Activated T-helper 1 cell treated with anti-CD3 and anti-CD28 coated beads, Interleukin-12 subunit alpha, Interleukin-12 subunit beta, Interleukin-2, Interleukin-4 antibody, amounts not matched to agents 30 ng/mL and 10 ng/mL and 1 ng/mL, durations not matched to agents 14 hours and 24 hours and 36 hours (primary cell): ENCODE measurements at regions of chr5 and their contacts with region 1.

Region 1: GRCh38 chr5:141691867-141692532 is 10.0 kb upstream of the ARAP3 start:
- DNase-seq: peak; percentile 83
- H3K4me3 Mint-ChIP-seq: peak overlapping the region; percentile 75
- H3K27ac Mint-ChIP-seq: peak overlapping the region; percentile 69
- H3K4me1 Mint-ChIP-seq: peaks cover 34% of the 10 kb centered on the region
- H3K27me3 Mint-ChIP-seq: peaks cover 12% of the 10 kb centered on the region

Region 2: DNA sequence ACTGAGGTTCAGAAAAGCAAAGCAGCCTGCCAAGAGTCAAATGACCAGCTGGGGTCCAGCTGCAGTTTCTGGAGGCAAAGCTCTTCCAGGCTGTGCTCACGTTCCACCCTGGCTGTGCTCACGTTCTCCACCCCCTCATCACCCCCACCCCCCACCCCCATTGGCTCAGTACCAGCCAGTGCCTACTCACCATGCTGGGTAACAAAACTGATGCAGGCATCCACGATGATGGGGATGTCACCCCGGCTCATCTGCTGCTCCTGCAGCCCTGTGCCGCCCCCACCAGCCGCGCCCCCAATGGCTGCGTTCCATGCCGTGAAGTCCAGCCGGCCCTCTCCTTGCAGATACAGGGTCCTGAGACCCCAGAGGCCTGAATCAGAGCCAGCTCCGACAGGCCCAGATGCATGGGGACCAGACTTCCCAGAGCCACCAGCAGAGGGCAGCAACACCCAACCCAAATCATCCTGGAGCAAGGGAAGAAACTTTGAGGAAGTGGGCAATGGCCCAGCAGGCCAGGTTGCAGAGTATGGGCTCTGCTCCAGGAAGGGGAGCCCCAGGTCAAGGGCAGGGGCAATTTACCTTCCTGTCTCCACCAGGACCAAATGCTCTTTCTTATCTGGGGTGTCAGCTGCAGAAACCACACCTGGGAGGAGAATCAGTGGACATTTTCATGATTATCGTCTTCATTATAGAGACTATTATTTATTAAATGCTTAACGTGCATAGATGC is 27.1 kb before region 1 on chr5:
- intact Hi-C with region 1: loop called (anchors 1 kb)
- DNase-seq: peak; percentile 59
- H3K4me3 Mint-ChIP-seq: no peak overlapping the region
- H3K27ac Mint-ChIP-seq: no peak overlapping the region
- H3K4me1 Mint-ChIP-seq: no peaks in the 10 kb centered on the region
- H3K27me3 Mint-ChIP-seq: peaks cover 2% of the 10 kb centered on the region

Region 3: GRCh38 chr5:141709699-141710267 is 17.8 kb after region 1 on chr5:
- intact Hi-C with region 1: no loop called
- DNase-seq: no peak
- H3K4me3 Mint-ChIP-seq: no peak overlapping the region
- H3K27ac Mint-ChIP-seq: no peak overlapping the region
- H3K4me1 Mint-ChIP-seq: no peaks in the 10 kb centered on the region
- H3K27me3 Mint-ChIP-seq: peaks cover 6% of the 10 kb centered on the region

Region 4: DNA sequence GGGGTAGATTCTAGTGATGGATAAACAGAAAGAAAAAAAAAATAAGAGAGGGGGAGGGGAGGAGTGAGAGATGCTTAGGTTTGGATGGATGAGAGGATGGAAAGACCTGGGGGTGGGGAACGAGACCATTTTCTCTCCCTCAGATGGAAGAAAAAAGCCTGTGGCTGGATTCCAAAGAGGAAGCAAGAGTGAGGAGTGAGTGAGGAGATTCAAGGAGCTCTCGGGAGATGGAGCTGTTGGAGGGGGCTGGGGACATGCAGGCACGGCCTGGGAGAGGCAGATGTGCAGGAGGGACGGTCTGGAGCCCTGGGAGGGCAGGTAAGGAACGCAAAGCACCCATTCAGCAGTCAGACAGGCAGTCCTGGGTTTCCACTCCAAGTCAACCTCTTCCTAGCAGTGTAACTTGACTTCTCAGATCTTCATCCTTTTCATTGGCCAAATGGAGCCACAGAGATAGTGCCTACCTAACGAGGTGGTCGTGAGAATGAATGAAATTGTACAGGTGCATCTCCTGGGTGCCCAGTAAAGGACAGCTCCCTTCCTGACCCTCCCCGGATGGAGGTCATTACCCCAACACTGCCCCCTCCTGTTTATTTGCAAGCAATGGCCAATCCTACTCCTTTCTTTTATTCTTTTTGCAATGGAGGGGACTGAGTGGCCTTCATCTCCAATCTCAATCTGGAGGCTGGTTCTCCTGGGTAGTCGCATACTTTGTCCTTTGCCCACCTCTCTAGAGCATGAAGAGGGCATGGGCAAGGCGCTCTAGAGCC is 134.0 kb after region 1 on chr5:
- intact Hi-C with region 1: loop called (anchors 5 kb)
- DNase-seq: no peak
- H3K4me3 Mint-ChIP-seq: no peak overlapping the region
- H3K27ac Mint-ChIP-seq: no peak overlapping the region
- H3K4me1 Mint-ChIP-seq: no peaks in the 10 kb centered on the region
- H3K27me3 Mint-ChIP-seq: peaks cover 21% of the 10 kb centered on the region

Region 5: DNA sequence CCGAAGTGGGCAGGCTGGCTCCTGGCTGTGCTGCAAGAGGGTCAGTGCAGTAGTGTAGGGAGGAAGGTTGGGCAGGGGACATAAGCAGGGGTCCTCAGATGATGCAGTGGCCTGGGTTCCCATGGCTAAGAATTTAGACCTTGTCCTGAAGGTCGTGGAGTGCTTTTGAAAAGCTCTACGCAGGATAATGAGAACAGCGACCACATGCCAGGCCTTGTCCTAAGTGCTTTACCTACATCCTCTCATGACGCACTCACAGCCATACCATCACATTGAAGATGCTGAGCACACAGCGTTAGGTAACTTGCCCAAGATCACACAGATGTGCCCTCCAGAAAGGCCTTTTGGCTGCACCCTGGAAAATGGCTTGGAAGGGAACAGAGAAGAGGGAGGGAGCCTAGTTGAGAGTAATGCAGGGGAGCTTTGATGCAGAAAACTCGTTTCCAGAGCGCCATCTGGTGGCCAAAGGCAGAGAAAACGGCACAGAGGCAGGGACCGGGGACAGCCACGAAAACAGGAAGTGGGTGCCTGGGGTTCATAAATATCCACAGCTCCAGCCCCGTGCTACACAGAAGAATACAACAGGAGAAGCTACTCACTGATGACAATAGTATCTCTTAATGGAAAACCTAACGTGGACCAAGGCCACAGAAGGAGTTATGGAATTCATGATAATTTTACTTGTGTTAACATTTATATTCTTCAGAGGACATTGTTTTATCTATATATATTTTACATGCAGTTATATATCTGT is 268.6 kb after region 1 on chr5:
- intact Hi-C with region 1: loop called (anchors 1 kb)
- DNase-seq: peak; percentile 82
- H3K4me3 Mint-ChIP-seq: peak overlapping the region; percentile 24
- H3K27ac Mint-ChIP-seq: peak overlapping the region; percentile 76
- H3K4me1 Mint-ChIP-seq: peaks cover 42% of the 10 kb centered on the region
- H3K27me3 Mint-ChIP-seq: no peaks in the 10 kb centered on the region

Region 6: DNA sequence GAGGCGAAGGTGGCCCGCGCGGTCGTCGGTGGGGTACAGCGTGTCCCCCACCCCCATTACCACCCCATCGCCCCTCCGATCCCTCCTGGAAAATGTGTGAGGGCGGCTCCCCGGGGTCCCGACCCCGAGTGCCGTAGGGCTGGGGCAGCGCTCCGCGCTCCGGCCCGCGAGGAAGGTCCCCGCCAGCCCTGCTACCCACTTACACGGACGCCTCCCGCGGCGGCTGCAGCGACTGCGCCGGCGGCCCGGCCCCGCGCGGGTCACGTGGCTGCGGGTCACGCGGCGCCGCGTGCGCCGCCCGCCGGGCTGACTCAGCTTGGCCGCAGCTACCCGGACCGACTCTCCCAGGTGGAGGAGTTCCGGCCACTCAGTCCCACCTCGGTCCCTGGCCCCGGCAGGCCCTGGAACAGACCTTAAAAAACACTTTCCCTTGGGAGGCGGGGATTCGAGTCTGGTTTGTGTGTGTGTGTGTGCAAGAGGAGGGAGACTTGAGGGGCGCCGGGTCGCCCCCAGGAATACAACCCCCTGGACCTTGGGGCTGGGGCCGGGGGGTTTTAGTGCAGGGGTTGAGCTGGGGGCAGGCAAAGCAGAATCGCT is 320.9 kb after region 1 on chr5 and contains the start of gene GNPDA1:
- intact Hi-C with region 1: loop called (anchors 1 kb)
- DNase-seq: peak; percentile 71
- H3K4me3 Mint-ChIP-seq: peak within 1 kb of the TSS; percentile 89
- H3K27ac Mint-ChIP-seq: peak within 1 kb of the TSS; percentile 97
- H3K4me1 Mint-ChIP-seq: peaks cover 87% of the 10 kb centered on the region
- H3K27me3 Mint-ChIP-seq: no peaks in the 10 kb centered on the region
- total RNA-seq, gene GNPDA1: 87.5 and 88.4 TPM in 2 replicates

Region 7: DNA sequence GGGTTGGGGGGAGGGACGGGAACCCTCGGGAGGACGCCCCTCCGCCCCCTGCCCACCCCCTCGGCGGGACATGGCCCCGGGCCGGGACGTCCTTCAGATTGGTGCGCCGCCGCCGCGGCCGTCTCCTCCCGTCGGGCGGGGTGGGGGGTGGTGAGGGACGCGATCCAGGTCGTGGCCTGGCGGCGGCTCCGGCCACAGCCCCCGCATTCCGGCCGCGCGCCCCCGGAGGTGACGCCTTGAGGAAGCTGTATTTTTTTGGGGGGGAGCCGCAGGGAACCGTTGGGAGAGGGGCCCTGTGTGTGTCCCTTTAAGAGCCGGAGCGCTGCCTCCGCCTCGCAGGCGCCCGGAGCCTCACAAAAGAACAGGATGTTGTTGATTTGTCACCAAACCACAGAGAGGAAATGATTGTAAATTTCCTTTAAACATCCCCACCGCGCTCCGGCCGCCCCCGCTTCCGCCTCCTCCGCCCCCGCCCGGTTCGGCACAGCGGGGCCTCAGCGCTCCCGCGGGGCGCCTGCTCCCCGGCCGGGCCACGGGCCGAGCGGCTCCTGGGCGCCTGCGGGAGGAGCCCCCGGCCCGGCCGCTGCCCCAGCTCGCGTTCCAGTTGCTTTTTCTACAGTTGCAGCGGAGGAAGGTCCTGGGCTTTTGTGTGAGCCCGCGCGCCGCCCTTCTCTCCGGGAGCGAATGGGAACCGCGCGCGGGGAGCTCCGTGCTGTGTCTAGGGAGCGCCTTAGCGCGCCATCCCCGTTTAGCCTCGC is 664.9 kb after region 1 on chr5:
- intact Hi-C with region 1: loop called (anchors 5 kb)
- DNase-seq: peak; percentile 88
- H3K4me3 Mint-ChIP-seq: peak overlapping the region; percentile 84
- H3K27ac Mint-ChIP-seq: peak overlapping the region; percentile 92
- H3K4me1 Mint-ChIP-seq: peaks cover 58% of the 10 kb centered on the region
- H3K27me3 Mint-ChIP-seq: no peaks in the 10 kb centered on the region